Adrenal gland (tissue), 19 donors: ENCODE measurements at regions of chr5 and their contacts with region 1.

Region 1: DNA sequence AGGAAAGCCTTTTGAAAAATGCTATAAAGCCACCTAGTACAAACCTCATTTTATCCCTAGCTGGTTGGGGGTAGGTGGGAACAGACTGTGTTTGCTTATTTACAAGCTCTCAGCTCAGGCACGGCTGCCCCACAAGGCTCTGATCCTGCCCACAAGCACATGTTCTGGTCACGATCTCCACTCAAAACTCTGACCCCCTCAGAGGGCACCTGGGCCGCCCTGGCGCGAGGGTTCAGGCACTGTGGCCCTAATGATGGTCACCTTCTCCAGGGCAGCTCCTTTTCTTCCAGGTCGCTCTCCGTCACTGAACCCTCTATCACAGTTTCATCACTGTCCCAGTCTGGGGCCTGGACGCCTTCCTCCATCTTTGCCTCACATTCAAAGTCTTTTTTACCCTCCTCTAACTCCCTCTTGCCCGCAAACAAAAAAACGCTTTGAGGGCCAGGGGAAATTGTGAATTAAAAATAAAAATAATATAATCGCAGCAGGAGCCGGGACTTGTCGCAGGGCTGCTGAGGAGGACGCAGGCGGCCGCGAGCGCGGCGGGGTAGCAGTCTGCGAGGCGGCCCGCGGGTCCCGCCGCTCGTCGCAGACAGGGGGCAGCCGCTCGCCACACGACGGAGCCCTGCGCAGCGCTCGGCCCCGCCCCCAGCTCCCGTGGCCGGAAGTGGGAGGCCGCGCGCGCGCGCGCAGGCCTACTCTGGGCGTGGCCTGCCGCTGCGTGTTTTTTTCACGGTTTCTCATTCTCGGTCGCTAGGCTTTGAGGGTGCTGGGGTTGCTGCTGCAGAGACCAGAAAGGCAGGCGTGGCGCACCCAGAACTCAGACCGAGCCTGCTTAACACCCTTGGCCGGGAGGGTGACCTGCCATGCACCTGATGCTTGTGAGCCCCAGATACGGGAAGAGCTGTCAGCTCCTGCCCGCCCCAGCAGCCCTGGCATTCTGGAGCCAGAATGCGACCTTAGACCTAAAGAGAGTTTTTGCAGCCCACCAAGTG is at the start of gene ANKRD31:
- DNase-seq: peak; percentile 80 to 90 (median 88)
- H3K4me3 ChIP-seq: peak within 1 kb of the TSS; percentile 3 to 93 (median 52)
- H3K27ac ChIP-seq: peak within 1 kb of the TSS in 4 of 5 donors; percentile 45 to 86 (median 76)
- H3K4me1 ChIP-seq: peaks cover 0 to 12% of the 10 kb centered on the region in 2 donors
- H3K27me3 ChIP-seq: no peaks in the 10 kb centered on the region
- CTCF ChIP-seq: peak; percentile 29 to 97 (median 78)
- POLR2A ChIP-seq: peak; percentile 59 to 66
- total RNA-seq, gene ANKRD31: 0.06 to 0.88 (median 0.43) TPM

Region 2: DNA sequence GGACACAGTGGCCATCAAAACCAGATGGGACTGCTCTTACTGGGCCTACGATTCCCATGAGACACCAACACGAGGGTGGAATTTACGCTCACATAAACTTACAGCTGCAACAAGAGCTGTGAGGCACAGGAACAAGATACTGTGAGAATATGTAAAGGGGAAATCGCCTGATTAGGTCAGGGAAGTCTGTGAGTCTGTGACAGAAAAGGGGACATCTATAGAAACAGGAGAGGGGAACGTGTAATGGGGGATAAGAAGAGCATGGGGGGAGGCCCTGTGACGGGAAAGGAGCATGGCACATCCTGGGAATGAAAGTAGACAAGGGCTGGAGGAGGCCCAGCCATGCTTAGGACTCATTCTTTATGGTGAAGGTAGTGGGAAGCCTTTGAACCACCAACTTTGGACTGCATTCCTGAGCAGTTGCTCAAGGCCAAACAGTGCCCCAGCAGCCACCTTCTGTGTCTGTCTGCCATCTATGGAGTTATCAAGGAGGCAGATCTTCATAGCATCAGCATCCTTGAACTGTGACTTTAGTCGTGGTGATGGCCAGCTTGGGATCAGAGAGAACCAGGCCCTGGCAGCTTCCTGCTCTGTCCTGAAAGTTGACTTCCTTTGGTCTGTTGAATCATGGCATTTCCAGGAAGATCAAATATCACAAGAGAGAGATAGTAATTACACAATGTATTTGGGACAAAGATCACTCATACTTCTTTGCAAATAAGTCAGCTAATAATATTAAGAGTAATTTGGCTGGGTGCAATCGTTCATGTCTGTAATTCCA is 282.5 kb before region 1 on chr5:
- intact Hi-C with region 1: no loop called
- DNase-seq: peak in 2 of 7 donors; percentile 44 to 61
- H3K4me3 ChIP-seq: no peak overlapping the region
- H3K27ac ChIP-seq: peak overlapping the region in 1 of 5 donors; percentile 29
- H3K4me1 ChIP-seq: peaks cover 0 to 3% of the 10 kb centered on the region in 2 donors
- H3K27me3 ChIP-seq: no peaks in the 10 kb centered on the region
- CTCF ChIP-seq: no peak
- POLR2A ChIP-seq: no peak

Region 3: DNA sequence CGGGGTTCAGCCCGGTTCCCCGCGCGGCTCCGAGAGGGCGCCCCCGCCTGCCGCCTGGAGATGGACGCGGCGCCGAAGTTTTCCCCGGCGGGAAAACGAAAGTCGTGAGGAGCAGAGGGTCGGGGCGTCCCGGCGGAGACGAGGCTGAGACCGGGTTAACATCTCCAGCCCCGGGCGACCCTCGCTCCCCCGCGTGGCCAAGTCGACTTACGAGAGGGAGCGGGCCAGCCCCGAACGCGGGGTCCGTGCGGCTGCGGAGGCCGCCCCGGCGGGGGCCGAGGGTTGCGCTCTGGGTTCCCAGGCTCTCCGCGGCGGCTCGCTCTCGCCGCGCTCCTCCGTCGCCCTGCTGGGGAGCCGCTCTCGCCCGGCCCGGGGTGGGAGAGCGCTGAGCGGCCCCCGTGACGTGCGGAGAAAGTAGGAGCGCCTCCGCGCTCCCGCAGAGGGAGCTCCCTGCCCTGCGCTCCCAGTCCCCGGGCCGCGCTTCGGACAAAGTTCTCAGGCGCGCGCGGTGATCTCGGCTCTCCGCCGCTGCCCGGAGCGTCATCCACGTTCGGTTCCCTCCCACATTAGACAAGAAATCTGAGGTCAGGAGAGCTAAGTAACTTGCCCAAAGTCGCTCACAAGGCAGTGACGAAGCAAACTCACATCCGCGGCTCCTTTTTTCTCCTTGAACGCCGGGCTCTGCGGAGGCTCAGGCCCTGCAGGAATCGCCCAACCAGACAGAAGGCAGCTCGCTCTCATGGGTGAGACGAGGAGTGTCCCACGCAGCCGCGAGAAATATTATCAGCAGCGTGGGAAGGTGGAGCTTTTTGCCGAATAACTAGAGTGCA is 183.1 kb before region 1 on chr5:
- intact Hi-C with region 1: loop called in 1 of 2 experiments (anchors 10 kb)
- DNase-seq: peak; percentile 57 to 77 (median 72)
- H3K4me3 ChIP-seq: peak overlapping the region; percentile 42 to 89 (median 71)
- H3K27ac ChIP-seq: peak overlapping the region; percentile 72 to 96 (median 91)
- H3K4me1 ChIP-seq: peaks cover 0 to 15% of the 10 kb centered on the region in 2 donors
- H3K27me3 ChIP-seq: no peaks in the 10 kb centered on the region
- CTCF ChIP-seq: peak in 3 of 6 experiments; percentile 7 to 11 (median 10)
- POLR2A ChIP-seq: peak in 1 of 2 donors; percentile 84

Region 4: DNA sequence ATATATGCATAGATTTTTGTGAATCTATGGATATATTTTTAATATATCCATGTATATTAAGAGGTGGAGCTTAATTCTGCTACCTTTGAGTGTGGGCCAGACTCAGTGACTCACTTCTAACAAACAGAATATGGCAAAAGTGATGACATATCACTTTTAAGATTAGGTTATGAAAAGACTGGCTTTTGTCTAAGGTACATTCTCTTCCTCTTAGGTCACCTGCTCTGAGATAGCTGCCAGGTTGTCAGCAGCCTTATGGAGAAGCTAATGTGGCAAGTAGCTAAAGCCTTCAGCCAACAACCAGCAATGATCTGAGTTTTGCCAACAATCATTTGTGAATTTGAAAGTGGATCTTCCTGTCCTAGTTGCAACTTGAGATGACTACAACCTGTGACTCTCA is 83.8 kb before region 1 on chr5:
- intact Hi-C with region 1: no loop called
- DNase-seq: no peak
- H3K4me3 ChIP-seq: no peak overlapping the region
- H3K27ac ChIP-seq: no peak overlapping the region
- H3K4me1 ChIP-seq: no peaks in the 10 kb centered on the region
- H3K27me3 ChIP-seq: no peaks in the 10 kb centered on the region
- CTCF ChIP-seq: no peak
- POLR2A ChIP-seq: no peak

Region 5: GRCh38 chr5:75412111-75412990 is 175.7 kb after region 1 on chr5:
- intact Hi-C with region 1: no loop called
- DNase-seq: no peak
- H3K4me3 ChIP-seq: no peak overlapping the region
- H3K27ac ChIP-seq: peak overlapping the region in 3 of 5 donors; percentile 10 to 31 (median 22)
- H3K4me1 ChIP-seq: peaks cover 9 to 11% of the 10 kb centered on the region in 2 donors
- H3K27me3 ChIP-seq: no peaks in the 10 kb centered on the region
- CTCF ChIP-seq: peak; percentile 15 to 44 (median 35)
- POLR2A ChIP-seq: no peak

Region 6: GRCh38 chr5:75511435-75512384 is 275.1 kb after region 1 on chr5 and contains the starts of genes CERT1 and POLK:
- intact Hi-C with region 1: loop called in 1 of 2 experiments (anchors 10 kb)
- DNase-seq: peak; percentile 98 to 99 (median 99)
- H3K4me3 ChIP-seq: peak within 1 kb of the TSS; percentile 79 to 87 (median 80)
- H3K27ac ChIP-seq: peak within 1 kb of the TSS; percentile 60 to 95 (median 92)
- H3K4me1 ChIP-seq: peaks cover 4 to 44% of the 10 kb centered on the region in 2 donors
- H3K27me3 ChIP-seq: no peaks in the 10 kb centered on the region
- CTCF ChIP-seq: no peak
- POLR2A ChIP-seq: peak; percentile 50 to 92
- total RNA-seq, gene CERT1: 30.6 to 67.6 (median 52.3) TPM
- total RNA-seq, gene POLK: 16.7 to 63.6 (median 38.8) TPM